Gastrocnemius medialis (tissue), 4 donors: ENCODE measurements at regions of chr9 and their contacts with region 1.

Region 1: GRCh38 chr9:76537150-76537646 is 78.2 kb downstream of the GCNT1 start:
- DNase-seq: no peak
- ATAC-seq: peak; percentile 21 to 23
- H3K4me3 ChIP-seq: no peak overlapping the region
- H3K27ac ChIP-seq: no peak overlapping the region
- H3K4me1 ChIP-seq: peaks cover 0 to 3% of the 10 kb centered on the region in 2 donors
- H3K27me3 ChIP-seq: no peaks in the 10 kb centered on the region
- CTCF ChIP-seq: no peak
- POLR2A ChIP-seq: no peak

Region 2: DNA sequence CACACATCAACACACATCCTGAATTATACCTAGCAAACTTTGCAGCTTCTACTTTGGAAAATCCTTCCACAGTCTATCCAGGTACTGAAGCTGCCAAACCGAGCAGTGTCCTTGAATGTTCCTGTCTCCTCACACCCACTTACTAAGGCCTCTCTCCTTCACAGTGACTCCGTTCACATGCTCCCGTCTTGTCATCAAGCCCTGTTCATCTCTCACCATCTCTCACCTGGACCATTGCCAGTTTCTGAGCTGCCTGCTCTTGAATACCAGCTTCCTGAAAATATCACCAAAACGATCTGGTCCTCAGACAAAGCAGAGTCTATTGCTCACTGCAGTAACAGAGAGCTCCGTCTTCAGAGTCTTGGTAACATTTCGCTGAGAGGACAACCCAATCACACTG is 20.8 kb before region 1 on chr9:
- in situ Hi-C with region 1: no loop called
- intact Hi-C with region 1: no loop called
- DNase-seq: no peak
- ATAC-seq: no peak
- H3K4me3 ChIP-seq: no peak overlapping the region
- H3K27ac ChIP-seq: no peak overlapping the region
- H3K4me1 ChIP-seq: no peaks in the 10 kb centered on the region
- H3K27me3 ChIP-seq: no peaks in the 10 kb centered on the region
- CTCF ChIP-seq: no peak
- POLR2A ChIP-seq: no peak

Region 3: DNA sequence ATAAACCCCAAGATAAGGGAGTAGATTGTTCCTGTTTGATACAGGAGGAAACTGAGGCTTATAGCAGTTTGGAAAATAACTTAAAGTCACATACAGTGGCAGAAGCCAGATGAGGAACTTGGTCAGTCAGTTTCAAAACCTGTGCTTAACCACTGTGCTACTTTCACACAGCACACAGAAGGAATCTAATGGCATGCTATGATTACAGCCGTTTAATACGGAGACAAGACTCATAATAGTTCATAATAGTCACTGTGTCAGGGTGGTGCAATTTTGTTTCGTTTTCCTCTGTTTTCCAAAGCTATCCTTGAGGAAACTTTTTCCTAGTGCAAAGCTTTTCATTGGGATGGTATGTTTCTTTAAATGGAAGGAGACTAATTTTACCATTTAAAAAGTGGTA is 34.1 kb after region 1 on chr9:
- in situ Hi-C with region 1: no loop called
- intact Hi-C with region 1: no loop called
- DNase-seq: no peak
- ATAC-seq: peak; percentile 44 to 47
- H3K4me3 ChIP-seq: peak overlapping the region; percentile 26 to 33 (median 28)
- H3K27ac ChIP-seq: peak overlapping the region in 1 of 4 donors; percentile 27
- H3K4me1 ChIP-seq: no peaks in the 10 kb centered on the region
- H3K27me3 ChIP-seq: no peaks in the 10 kb centered on the region
- CTCF ChIP-seq: no peak
- POLR2A ChIP-seq: no peak

Region 4: DNA sequence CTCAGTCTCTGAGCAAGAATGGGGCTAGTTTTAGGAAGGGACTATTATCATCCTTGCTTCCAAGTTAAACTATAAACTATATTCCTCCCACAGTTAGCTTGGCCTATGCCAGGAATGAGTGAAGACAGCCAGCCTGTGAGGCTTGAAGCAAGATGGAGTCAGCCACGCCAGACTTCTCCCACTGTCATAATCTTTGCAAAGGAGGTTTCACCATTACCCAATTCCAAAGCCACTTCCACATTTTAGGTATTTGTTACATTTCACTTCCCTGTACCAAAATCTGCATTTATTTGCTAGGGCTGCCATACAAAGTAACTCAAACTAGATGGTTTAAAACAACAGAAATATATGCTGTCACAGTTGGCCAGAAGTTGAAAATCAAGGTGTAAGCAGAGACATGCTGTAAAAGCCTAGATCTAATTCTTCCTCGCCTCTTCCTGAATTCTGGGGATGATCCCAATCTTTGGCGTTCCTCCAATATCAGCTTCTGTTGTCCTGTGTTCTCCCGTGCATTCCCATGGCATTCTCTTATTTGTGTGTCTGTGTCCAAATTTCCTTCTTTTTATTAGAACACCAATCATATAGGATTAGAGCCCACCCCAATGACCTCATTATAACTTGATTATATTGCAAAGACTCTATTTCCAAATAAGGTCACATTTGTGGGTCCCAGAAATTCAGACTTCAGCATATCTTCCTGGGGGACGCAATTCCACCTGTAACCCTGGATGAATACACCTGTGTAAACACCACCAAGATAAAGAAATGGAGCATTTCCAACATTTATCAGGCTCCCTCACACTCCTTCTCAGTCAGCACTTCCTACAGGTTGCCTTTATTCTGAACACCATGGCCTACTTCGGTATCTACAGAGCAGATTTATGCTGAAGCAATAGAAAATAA is 48.5 kb after region 1 on chr9:
- in situ Hi-C with region 1: loop called in 1 of 4 experiments (anchors 5 kb)
- intact Hi-C with region 1: no loop called
- DNase-seq: no peak
- ATAC-seq: no peak
- H3K4me3 ChIP-seq: no peak overlapping the region
- H3K27ac ChIP-seq: no peak overlapping the region
- H3K4me1 ChIP-seq: no peaks in the 10 kb centered on the region
- H3K27me3 ChIP-seq: no peaks in the 10 kb centered on the region
- CTCF ChIP-seq: no peak
- POLR2A ChIP-seq: no peak